ENCODE measurements at regions of chr20 and their contacts with region 1.

Region 1: DNA sequence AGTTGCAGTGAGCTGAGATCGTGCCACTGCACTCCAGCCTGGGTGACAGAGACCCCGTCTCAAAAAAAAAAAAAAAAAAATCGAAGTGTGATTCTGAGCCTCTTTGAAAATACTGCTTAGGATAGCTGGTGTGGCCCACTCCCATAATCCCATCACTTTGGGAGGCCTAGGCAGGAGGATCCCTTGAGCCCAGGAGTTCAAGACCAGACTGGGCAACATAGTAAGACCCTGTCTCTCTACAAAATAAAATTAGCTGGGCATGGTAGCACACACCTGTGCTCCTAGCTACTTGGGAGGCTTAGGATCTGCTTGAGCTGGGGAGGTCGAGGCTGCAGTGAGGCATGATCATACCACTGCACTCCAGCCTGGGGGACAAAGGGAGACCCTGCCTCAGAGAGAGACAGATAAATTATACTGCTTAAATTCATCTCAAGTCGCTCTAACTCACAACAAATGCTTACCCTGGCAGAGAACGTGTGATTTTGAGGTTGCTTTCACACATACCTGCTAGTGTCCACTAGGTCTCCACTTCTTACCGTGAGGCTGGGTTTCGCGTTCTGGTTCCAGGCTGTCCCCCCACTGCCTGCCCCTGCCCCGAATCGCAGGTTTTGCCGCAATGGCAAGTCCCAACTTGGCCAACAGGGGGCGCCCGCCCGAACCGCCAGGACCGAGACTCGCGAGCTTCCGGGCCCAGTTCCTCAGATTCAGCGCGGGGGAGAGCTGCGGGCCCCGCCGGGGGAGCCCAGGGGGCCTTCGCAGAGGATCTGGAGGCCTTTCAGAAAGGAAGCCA is 12.3 kb upstream of the TMC2 start:
- DNase-seq: peak; percentile 49 to 99
- H3K4me3 ChIP-seq: peak overlapping the region; percentile 58 to 82 (median 74)
- H3K27ac ChIP-seq: no peak overlapping the region
- H3K4me1 ChIP-seq: no peaks in the 10 kb centered on the region
- H3K27me3 ChIP-seq: peaks cover 4 to 55% (median 37%) of the 10 kb centered on the region in 4 experiments
- CTCF ChIP-seq: peak; percentile 83 to 92 (median 92)
- EP300 ChIP-seq: 0 out of 3 replicates have a peak, but pooled peaks of 1 of the 2 experiments have one; percentile 14
- POLR2A ChIP-seq: peak in 1 of 2 experiments; percentile 47; a peak in 1 of 3 replicates
- RAD21 ChIP-seq: peak; percentile 49 to 63

Region 2: DNA sequence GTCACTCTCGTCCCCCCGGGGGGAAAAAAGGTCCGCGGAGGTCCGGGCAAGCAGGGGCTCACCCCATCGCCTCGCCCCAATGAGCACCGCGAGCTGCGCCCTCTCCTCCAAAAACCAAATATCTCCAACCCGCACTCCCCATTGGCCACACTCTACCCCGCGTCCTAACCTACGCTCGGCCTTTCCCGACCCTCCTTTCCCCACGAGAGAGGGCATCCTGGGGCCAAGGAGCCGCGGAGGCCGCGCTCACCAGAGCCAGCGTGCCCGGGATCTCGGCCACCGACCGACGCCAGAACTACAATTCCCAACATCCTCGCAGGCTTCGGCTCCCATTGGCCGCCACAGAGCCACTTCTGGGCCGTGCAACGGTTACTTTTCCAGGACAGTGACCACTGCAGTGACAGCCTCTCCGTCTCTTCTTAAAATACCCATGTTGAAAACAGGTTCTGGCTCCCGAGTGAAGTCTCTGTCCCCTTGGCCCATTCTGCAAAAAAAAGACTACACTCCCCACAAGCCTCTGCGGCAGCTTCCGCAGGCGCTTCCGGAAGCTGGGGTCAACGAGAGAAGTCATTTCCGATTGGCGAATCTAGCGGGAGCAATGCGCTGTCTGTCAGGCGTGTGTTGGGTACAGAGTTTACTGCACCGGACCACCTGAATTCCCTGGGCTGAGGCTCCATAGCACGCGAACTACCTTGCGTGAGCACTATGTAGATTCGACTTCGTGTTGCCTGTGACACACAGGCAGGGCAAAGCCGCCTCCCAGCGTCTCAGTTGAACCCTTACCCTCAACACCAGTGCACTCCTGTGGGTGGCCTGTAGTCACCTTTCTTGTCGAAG is 15.3 kb before region 1 on chr20 and contains the start of gene ZNF343:
- CTCF ChIA-PET with region 1: interaction called, 22 read pairs
- POLR2A ChIA-PET with region 1: interaction called, 4 read pairs
- DNase-seq: peak; percentile 31 to 77
- H3K4me3 ChIP-seq: peak within 1 kb of the TSS; percentile 66 to 83 (median 80)
- H3K27ac ChIP-seq: peak within 1 kb of the TSS; percentile 63; the same call in 1 of the 2 replicates
- H3K4me1 ChIP-seq: peaks cover 0 to 5% (median 2%) of the 10 kb centered on the region in 4 experiments; a peak in 3 of 7 replicates
- H3K27me3 ChIP-seq: peaks cover 28 to 58% (median 50%) of the 10 kb centered on the region in 4 experiments
- CTCF ChIP-seq: no peak
- EP300 ChIP-seq: no peak
- POLR2A ChIP-seq: no peak
- RAD21 ChIP-seq: no peak
- total RNA-seq, gene ZNF343: 3.7 and 5.0 TPM in 2 replicates

Region 3: DNA sequence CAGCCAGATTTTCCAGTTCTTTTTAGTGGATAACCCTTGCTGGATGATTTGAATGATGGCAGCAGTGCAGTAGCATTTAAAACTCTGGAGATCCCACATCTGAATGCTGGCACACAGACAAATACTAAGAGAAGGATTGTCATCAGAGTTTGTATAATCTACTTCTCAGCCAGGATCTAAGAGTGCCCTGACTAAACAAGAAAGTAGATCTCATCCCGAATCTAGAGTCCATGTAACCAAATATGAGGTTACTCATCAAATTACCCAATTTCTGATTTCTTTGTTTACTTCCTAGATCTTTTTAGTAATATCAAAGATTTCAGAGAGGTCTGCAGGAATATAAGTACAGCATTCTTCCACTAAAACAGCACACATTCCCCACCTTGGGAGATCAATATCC is 20.1 kb after region 1 on chr20:
- CTCF ChIA-PET with region 1: interaction called, 35 read pairs
- POLR2A ChIA-PET with region 1: no interaction called
- DNase-seq: no peak
- H3K4me3 ChIP-seq: no peak overlapping the region
- H3K27ac ChIP-seq: no peak overlapping the region
- H3K4me1 ChIP-seq: no peaks in the 10 kb centered on the region
- H3K27me3 ChIP-seq: no peaks in the 10 kb centered on the region; a peak in 2 of 7 replicates
- CTCF ChIP-seq: no peak
- EP300 ChIP-seq: no peak
- POLR2A ChIP-seq: no peak
- RAD21 ChIP-seq: no peak

Region 4: GRCh38 chr20:2585811-2586210 is 61.7 kb after region 1 on chr20:
- CTCF ChIA-PET with region 1: interaction called, 10 read pairs
- POLR2A ChIA-PET with region 1: no interaction called
- DNase-seq: peak in 1 of 2 experiments; percentile 2
- H3K4me3 ChIP-seq: no peak overlapping the region
- H3K27ac ChIP-seq: no peak overlapping the region
- H3K4me1 ChIP-seq: no peaks in the 10 kb centered on the region
- H3K27me3 ChIP-seq: no peaks in the 10 kb centered on the region
- CTCF ChIP-seq: no peak
- EP300 ChIP-seq: no peak
- POLR2A ChIP-seq: no peak
- RAD21 ChIP-seq: no peak

Region 5: DNA sequence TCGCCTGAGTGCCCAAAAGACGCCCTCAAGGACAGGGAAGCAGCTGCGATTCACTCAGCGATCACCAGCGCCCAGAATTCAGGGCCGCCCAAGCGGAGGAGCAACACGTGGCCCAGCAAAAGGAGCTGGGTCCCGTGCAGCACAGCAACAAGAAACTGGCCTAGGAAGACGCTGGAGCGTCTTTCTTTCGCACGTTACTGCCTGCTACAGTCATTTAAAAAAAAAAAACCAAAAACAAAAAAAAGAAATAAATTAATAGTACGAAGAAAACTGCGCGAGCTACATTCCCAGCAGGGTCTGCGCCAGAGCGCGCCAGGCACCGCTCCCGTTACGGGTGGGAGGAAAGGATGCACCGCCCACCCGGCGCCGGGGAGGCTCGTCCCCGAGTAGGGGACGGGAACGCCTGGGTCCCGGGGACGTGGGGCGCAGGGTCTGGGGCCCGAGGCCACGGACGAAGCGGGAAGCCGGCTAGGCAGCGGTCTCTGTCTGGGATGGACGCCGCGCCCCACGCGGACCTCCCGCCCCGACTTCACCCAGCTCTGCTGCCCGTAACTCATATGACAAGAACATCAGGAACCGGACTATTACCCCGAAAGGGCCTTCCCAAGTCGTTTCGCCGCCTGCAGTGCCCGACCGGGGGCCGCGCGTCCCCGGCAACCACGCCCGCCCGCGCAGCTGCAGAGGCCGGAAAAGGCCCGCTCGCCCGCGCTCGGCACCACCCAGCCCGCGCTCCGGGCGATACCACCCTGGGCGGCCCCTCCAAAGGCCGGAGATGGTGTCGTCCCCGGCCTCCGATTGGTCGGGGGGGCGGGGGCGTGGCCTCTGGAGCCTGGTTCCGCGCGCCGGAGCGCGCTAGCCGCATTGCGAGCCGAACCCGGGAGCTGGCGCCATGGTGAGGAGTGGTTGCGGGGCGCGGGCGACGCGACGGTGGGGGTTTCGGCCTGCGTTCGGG is 127.9 kb after region 1 on chr20 and contains the start of gene NOP56:
- CTCF ChIA-PET with region 1: interaction called, 11 read pairs
- POLR2A ChIA-PET with region 1: interaction called, 10 read pairs
- DNase-seq: peak; percentile 62 to 97
- H3K4me3 ChIP-seq: peak within 1 kb of the TSS; percentile 94 to 100 (median 98)
- H3K27ac ChIP-seq: peak within 1 kb of the TSS; percentile 96
- H3K4me1 ChIP-seq: peaks cover 0 to 5% (median 3%) of the 10 kb centered on the region in 4 experiments; a peak in 5 of 7 replicates
- H3K27me3 ChIP-seq: no peaks in the 10 kb centered on the region
- CTCF ChIP-seq: no peak
- EP300 ChIP-seq: peak in 1 of 2 experiments; percentile 99; a peak in 2 of 3 replicates
- POLR2A ChIP-seq: peak; percentile 93 to 95
- RAD21 ChIP-seq: no peak
- total RNA-seq, gene NOP56: 668 and 677 TPM in 2 replicates

Region 6: GRCh38 chr20:2900845-2901592 is 376.9 kb after region 1 on chr20:
- CTCF ChIA-PET with region 1: no interaction called
- POLR2A ChIA-PET with region 1: no interaction called
- DNase-seq: no peak
- H3K4me3 ChIP-seq: no peak overlapping the region
- H3K27ac ChIP-seq: no peak overlapping the region
- H3K4me1 ChIP-seq: no peaks in the 10 kb centered on the region
- H3K27me3 ChIP-seq: no peaks in the 10 kb centered on the region
- CTCF ChIP-seq: no peak
- EP300 ChIP-seq: no peak
- POLR2A ChIP-seq: no peak
- RAD21 ChIP-seq: no peak

Measured in H1 (cell line).